PC-9 (cell line): ENCODE measurements at regions of chr3 and their contacts with region 1.

Region 1: DNA sequence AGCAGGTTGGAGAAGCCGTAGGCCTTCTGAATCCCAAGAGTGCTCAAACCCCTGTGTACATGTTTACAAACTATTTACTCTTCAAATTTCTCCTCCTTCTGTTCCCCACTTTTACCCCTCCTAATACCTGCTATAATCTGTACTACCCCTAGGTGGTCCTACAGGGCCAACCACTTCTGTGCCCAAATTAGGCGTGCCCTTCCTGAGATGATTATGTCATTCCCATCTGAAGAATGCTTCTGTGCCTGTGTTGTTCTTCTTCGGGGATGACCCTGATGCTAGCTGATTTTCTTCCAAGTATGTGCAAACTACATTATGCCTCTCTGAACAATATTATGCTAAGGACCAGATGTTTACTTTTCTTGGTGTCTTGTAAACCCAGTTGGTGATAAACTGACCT is 20.5 kb downstream of the RBP2 start:
- DNase-seq: no peak
- H3K4me3 ChIP-seq: no peak overlapping the region
- H3K27ac ChIP-seq: no peak overlapping the region
- H3K4me1 ChIP-seq: no peaks in the 10 kb centered on the region
- H3K27me3 ChIP-seq: no peaks in the 10 kb centered on the region
- CTCF ChIP-seq: peak; percentile 40

Region 2: DNA sequence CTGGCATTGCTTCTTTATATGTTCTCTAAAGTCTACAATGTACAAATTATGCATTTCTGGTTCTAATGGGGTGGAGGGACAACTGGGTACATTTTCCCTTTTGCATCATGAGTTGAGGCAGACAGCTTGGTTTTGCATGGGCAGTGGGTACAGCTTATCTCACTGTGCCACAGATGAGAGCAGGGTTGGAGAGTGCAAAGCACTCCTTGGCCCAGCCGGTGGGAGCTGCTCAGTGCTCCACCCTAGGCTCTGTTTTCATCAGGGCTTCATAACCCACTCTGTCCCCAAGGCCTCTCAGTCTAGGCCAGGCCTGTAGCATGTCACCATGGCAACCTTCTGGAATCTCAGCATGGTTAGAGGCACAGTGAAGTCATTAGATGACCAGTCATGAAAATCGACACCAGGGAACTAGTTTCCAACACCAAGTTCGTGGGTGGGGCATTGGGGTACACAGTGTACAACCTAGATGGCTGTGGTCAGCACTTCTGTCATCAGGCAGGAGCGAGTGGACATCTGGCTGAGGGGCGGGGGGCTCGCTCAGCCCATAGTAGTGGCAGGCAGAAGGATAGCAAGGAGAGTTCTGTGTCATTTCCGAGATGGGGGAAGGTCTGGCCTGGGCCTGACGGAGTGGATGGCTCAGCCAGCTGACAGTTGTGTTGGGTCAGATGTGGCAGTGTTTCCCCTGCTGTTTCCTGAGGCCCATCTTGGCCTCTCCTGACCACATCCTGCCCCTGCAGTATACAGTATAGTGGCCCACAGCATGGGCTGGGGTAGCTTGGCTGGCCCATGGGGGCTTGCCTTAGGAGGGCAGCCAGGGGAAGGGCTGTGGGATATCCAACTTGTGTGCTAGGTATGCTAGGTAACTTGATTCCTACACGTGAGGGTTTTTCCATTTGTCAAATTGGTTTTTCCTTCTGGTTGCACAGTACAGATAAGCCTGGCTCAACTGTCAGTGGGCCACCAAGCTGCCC is 335.5 kb before region 1 on chr3:
- CTCF ChIA-PET with region 1: no interaction called
- POLR2A ChIA-PET with region 1: interaction called, 13 read pairs
- intact Hi-C with region 1: no loop called
- DNase-seq: no peak
- H3K4me3 ChIP-seq: no peak overlapping the region
- H3K27ac ChIP-seq: no peak overlapping the region
- H3K4me1 ChIP-seq: no peaks in the 10 kb centered on the region
- H3K27me3 ChIP-seq: no peaks in the 10 kb centered on the region
- CTCF ChIP-seq: no peak

Region 3: DNA sequence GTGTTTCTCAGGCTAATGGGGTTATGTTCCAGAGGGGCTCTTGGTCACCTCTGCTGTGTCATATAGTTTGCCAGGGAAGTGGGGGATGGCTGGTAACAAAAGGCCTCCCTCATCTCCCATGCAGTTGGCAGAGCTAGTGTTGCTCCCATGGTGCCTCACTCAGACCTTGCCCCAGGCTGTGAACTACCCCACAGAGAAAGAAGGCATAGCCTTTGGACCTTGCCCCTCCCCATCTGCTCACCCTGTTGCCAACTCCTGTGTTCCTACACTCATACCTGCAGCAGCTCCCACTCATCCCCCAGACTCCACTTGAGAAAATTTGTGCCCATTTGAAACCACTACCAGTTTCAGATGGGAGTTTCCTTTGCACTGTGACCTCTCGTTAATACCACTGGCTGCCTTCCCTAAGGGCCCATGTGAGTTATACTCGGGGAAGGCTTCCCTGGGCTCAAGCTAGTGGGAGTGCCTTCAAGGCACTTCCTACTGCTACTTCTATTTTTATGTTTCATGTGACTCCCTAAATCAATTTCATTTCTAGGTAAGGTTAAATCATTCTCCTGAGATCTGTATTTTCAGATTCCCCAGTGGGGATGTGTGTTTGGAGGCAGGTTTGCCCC is 41.1 kb before region 1 on chr3:
- CTCF ChIA-PET with region 1: interaction called, 12 read pairs
- POLR2A ChIA-PET with region 1: no interaction called
- intact Hi-C with region 1: no loop called
- DNase-seq: no peak
- H3K4me3 ChIP-seq: no peak overlapping the region
- H3K27ac ChIP-seq: no peak overlapping the region
- H3K4me1 ChIP-seq: no peaks in the 10 kb centered on the region
- H3K27me3 ChIP-seq: no peaks in the 10 kb centered on the region
- CTCF ChIP-seq: no peak